Psoas muscle (tissue), 8 donors: ENCODE measurements at regions of chr5 and their contacts with region 1.

Region 1: DNA sequence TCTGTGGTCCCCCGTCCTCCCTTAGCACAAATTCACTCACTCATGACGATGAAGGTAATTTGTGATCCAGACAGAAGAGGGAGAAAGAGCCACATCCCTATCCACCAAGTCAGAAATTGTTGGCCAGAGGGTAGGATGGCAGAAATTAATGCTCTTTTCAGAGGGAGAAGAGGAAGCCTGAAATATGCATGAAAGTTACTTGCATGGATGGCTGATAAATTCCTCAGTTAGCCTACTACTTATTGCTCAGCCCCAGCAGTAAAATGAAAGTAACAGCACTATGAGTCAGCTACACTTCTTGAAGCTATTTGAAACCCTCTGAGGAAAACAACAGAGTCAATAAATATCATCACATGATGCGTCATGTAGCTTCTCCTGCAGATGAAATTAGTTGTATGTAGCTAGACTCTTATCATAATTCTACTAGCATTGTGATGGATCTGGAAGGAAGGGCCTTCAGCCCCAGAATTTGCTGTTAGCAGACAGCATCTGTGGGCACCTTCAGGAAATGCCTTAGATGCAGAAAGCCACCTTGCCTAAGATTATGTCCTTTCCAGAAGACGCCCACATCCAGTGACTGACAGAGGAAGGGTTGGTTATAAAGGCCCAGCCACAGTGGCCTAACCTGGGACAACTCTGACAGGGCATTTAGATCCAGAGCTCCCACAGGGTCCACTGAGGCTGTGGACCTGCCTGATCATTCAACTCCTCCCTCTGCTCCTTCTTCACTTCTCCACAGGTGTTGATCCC is 81.2 kb upstream of the CCDC112 start:
- DNase-seq: no peak
- ATAC-seq: peak; percentile 41 to 76 (median 59)
- H3K4me3 ChIP-seq: no peak overlapping the region
- H3K27ac ChIP-seq: peak overlapping the region; percentile 80
- H3K4me1 ChIP-seq: peaks cover 47% of the 10 kb centered on the region
- H3K27me3 ChIP-seq: no peaks in the 10 kb centered on the region
- CTCF ChIP-seq: peak; percentile 50

Region 2: GRCh38 chr5:115415143-115415491 is 37.5 kb after region 1 on chr5:
- intact Hi-C with region 1: loop called (anchors 5 to 10 kb)
- DNase-seq: no peak
- ATAC-seq: peak; percentile 18 to 41 (median 37)
- H3K4me3 ChIP-seq: no peak overlapping the region
- H3K27ac ChIP-seq: peak overlapping the region; percentile 17
- H3K4me1 ChIP-seq: peaks cover 18% of the 10 kb centered on the region
- H3K27me3 ChIP-seq: no peaks in the 10 kb centered on the region
- CTCF ChIP-seq: no peak

Region 3: GRCh38 chr5:115472271-115473025 is 94.8 kb after region 1 on chr5:
- intact Hi-C with region 1: loop called in 1 of 2 experiments (anchors 5 kb)
- DNase-seq: peak; percentile 33 to 63
- ATAC-seq: peak; percentile 80 to 87 (median 86)
- H3K4me3 ChIP-seq: no peak overlapping the region
- H3K27ac ChIP-seq: peak overlapping the region; percentile 78
- H3K4me1 ChIP-seq: peaks cover 24% of the 10 kb centered on the region
- H3K27me3 ChIP-seq: no peaks in the 10 kb centered on the region
- CTCF ChIP-seq: no peak

Region 4: DNA sequence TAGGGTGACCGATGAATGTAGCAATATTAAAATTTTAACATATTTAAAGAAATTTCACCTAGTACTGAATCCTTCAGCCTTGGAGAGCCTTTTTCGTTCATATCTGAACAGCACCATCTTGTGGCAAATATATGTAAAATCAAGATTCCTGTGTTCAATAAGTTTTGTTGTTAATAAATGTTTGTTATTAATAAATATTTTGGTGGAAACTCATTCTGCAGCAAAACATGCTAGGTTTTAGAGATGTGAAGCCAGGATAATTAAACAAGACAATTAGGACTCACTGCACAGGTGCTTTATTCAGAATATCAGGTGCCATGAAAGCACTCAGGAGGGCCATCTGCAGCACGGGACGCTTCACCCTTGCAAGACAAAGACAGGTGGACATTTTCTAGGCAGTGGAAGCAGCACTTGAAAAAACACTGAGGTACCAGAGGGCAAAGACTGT is 209.0 kb after region 1 on chr5:
- intact Hi-C with region 1: loop called in 1 of 2 experiments (anchors 10 kb)
- DNase-seq: no peak
- ATAC-seq: peak; percentile 43 to 66 (median 52)
- H3K4me3 ChIP-seq: no peak overlapping the region
- H3K27ac ChIP-seq: no peak overlapping the region
- H3K4me1 ChIP-seq: peaks cover 29% of the 10 kb centered on the region
- H3K27me3 ChIP-seq: no peaks in the 10 kb centered on the region
- CTCF ChIP-seq: peak; percentile 71